CD4-positive, alpha-beta memory T cell (primary cell): ENCODE measurements at regions of chr17 and their contacts with region 1.

Region 1: GRCh38 chr17:63406689-63407330 is 39.3 kb downstream of the CYB561 start:
- DNase-seq: peak; percentile 65 to 76 (median 67)
- H3K4me3 ChIP-seq: no peak overlapping the region
- H3K4me3 Mint-ChIP-seq: no peak overlapping the region
- H3K27ac ChIP-seq: no peak overlapping the region
- H3K27ac Mint-ChIP-seq: peak overlapping the region in 5 of 7 donors; percentile 10 to 86 (median 81)
- H3K4me1 ChIP-seq: peaks cover 5% of the 10 kb centered on the region
- H3K4me1 Mint-ChIP-seq: peaks cover 2 to 9% (median 7%) of the 10 kb centered on the region in 4 donors
- H3K27me3 ChIP-seq: no peaks in the 10 kb centered on the region
- H3K27me3 Mint-ChIP-seq: no peaks in the 10 kb centered on the region

Region 2: GRCh38 chr17:62671583-62672312 is 735.1 kb before region 1 on chr17:
- CTCF ChIA-PET with region 1: interaction called, 15 read pairs
- POLR2A ChIA-PET with region 1: no interaction called
- intact Hi-C with region 1: no loop called
- DNase-seq: no peak
- H3K4me3 ChIP-seq: no peak overlapping the region
- H3K4me3 Mint-ChIP-seq: no peak overlapping the region
- H3K27ac ChIP-seq: no peak overlapping the region
- H3K27ac Mint-ChIP-seq: peak overlapping the region in 1 of 7 donors; percentile 55
- H3K4me1 ChIP-seq: no peaks in the 10 kb centered on the region
- H3K4me1 Mint-ChIP-seq: peaks cover 0 to 4% (median 3%) of the 10 kb centered on the region in 4 donors
- H3K27me3 ChIP-seq: no peaks in the 10 kb centered on the region
- H3K27me3 Mint-ChIP-seq: no peaks in the 10 kb centered on the region

Region 3: GRCh38 chr17:62995377-62995885 is 411.4 kb before region 1 on chr17:
- CTCF ChIA-PET with region 1: interaction called, 8 read pairs
- POLR2A ChIA-PET with region 1: no interaction called
- intact Hi-C with region 1: loop called (anchors 10 kb)
- DNase-seq: peak in 2 of 5 donors; percentile 2
- H3K4me3 ChIP-seq: no peak overlapping the region
- H3K4me3 Mint-ChIP-seq: no peak overlapping the region
- H3K27ac ChIP-seq: no peak overlapping the region
- H3K27ac Mint-ChIP-seq: no peak overlapping the region
- H3K4me1 ChIP-seq: no peaks in the 10 kb centered on the region
- H3K4me1 Mint-ChIP-seq: peaks cover 2 to 12% (median 10%) of the 10 kb centered on the region in 4 donors
- H3K27me3 ChIP-seq: no peaks in the 10 kb centered on the region
- H3K27me3 Mint-ChIP-seq: no peaks in the 10 kb centered on the region

Region 4: DNA sequence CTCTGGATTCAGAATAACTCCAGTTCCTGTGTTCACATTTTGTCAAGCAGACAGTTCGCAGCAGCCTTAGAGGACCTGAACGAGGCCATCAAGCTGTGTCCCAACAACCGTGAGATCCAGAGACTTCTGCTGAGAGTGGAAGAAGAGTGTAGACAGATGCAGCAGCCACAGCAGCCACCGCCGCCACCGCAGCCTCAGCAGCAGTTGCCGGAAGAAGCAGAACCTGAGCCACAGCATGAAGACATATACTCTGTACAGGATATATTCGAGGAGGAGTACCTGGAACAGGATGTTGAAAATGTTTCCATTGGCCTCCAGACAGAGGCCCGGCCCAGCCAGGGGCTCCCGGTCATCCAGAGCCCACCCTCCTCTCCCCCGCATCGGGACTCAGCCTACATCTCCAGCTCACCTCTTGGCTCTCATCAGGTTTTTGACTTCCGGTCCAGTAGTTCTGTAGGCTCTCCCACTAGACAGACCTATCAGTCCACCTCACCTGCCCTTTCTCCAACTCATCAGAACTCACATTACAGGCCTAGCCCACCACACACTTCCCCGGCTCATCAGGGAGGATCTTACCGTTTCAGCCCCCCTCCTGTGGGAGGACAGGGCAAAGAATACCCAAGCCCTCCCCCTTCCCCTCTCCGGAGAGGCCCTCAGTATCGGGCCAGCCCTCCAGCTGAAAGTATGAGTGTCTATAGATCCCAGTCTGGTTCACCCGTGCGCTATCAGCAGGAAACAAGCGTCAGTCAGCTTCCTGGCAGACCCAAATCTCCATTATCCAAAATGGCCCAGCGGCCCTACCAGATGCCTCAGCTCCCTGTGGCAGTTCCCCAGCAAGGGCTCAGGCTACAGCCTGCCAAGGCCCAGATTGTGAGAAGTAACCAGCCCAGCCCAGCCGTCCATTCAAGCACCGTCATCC is 13.4 kb after region 1 on chr17:
- CTCF ChIA-PET with region 1: interaction called, 50 read pairs
- POLR2A ChIA-PET with region 1: interaction called, 3 read pairs
- intact Hi-C with region 1: no loop called
- DNase-seq: peak; percentile 32 to 55 (median 42)
- H3K4me3 ChIP-seq: no peak overlapping the region
- H3K4me3 Mint-ChIP-seq: peak overlapping the region; percentile 41 to 68 (median 61)
- H3K27ac ChIP-seq: no peak overlapping the region
- H3K27ac Mint-ChIP-seq: peak overlapping the region; percentile 47 to 93 (median 85)
- H3K4me1 ChIP-seq: peaks cover 17% of the 10 kb centered on the region
- H3K4me1 Mint-ChIP-seq: peaks cover 7 to 22% (median 14%) of the 10 kb centered on the region in 4 donors
- H3K27me3 ChIP-seq: no peaks in the 10 kb centered on the region
- H3K27me3 Mint-ChIP-seq: no peaks in the 10 kb centered on the region

Region 5: DNA sequence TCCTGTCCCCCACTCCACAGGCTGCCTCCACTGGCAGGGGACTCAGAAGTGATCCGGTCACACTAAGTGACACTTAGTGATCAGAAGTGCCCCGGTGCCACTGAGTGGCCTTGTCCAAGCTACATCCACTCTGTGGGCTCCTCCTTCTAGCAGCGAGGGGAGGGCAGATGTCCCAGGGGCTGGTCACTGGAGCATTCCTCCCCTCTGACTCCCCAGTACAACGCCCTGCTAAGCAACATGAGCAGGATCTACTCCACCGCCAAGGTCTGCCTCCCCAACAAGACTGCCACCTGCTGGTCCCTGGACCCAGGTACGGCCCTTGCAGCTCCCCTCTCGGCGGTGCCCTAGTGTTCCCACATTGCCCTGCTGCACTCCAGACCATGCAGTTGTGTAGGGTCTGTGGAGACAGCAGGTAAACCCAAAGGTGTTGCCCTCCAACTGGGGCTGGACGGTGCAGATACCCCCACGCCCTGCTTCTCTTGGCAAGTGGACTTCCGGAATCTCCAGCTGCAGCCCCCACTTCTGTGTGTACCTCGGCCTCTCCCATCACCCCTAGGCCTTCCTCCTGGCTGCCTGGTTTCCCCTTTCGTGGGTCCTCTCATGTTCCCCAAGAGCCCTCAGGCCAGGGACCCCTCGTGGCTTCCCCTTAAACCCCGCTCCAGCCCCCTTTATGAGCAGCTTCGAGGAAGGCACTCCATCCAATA is 72.1 kb after region 1 on chr17:
- CTCF ChIA-PET with region 1: interaction called, 16 read pairs
- POLR2A ChIA-PET with region 1: interaction called, 4 read pairs
- intact Hi-C with region 1: loop called (anchors 1 kb)
- DNase-seq: peak; percentile 76 to 83 (median 77)
- H3K4me3 ChIP-seq: no peak overlapping the region
- H3K4me3 Mint-ChIP-seq: peak overlapping the region; percentile 49 to 86 (median 70)
- H3K27ac ChIP-seq: no peak overlapping the region
- H3K27ac Mint-ChIP-seq: peak overlapping the region in 5 of 7 donors; percentile 32 to 75 (median 57)
- H3K4me1 ChIP-seq: peaks cover 27% of the 10 kb centered on the region
- H3K4me1 Mint-ChIP-seq: peaks cover 8 to 34% (median 16%) of the 10 kb centered on the region in 4 donors
- H3K27me3 ChIP-seq: peaks cover 8% of the 10 kb centered on the region
- H3K27me3 Mint-ChIP-seq: no peaks in the 10 kb centered on the region